OCI-LY7 (cell line): ENCODE measurements at regions of chr2 and their contacts with region 1.

Region 1: DNA sequence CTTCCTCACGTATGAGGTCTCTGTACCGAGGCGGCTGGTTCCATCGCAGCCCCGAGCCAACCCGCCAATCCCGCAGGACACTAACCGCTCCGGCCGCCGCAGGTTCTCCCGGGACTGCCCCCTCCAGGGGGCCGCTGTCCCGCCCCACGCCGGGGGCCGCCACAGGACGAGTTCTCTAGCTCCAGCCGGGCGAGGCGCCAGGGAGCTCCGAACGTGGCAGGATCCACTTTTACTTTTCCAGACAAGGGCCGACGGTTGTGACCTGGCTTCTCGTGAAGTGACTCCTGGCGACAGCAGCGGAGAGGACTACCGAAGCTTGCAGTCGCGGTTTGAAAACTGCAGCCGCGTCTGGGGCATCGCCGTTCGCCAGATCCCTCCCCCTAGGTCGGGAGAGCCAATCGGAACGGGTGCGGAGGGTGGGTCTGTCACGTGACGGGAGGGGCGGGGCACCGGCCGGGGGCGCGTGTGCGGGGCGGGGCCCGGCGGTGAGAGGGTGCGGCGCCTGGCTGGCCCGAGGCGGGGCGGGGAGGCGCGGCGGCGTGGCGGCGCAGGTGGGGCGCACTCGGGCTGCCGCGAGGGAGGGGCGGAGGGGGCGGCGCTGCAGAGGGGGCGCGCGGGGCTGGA is at the start of gene STK17B:
- DNase-seq: peak; percentile 97
- H3K4me3 ChIP-seq: peak within 1 kb of the TSS; percentile 98
- H3K27ac ChIP-seq: peak within 1 kb of the TSS; percentile 99
- H3K4me1 ChIP-seq: peaks cover 37% of the 10 kb centered on the region
- CTCF ChIP-seq: no peak
- total RNA-seq, gene STK17B: 87.4 and 95.0 TPM in 2 replicates

Region 2: GRCh38 chr2:195559431-195559914 is 611.9 kb before region 1 on chr2:
- CTCF ChIA-PET with region 1: no interaction called
- POLR2A ChIA-PET with region 1: interaction called, 4 read pairs
- intact Hi-C with region 1: loop called (anchors 5 kb)
- DNase-seq: peak; percentile 97
- H3K4me3 ChIP-seq: peak overlapping the region; percentile 38
- H3K27ac ChIP-seq: peak overlapping the region; percentile 95
- H3K4me1 ChIP-seq: peaks cover 68% of the 10 kb centered on the region
- CTCF ChIP-seq: no peak

Region 3: DNA sequence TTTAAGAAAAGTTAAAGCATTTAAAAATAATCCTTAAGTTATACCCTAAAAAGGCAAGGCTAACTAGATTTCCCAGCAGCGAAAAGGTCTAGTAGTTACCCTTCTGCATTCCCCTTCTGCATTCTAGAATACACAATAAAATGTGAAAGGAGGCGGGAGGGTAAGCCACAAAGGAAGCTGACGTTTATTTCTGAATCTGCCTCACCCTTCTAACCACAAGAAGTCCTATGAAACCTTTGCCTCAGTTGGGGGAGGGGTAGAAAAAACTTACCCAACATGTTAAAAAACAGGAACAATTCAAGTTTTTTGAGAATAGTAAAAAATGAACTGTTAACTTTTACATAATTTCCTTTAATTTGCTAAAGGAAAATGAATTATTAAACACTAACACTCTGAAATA is 11.3 kb before region 1 on chr2:
- CTCF ChIA-PET with region 1: interaction called, 3 read pairs
- POLR2A ChIA-PET with region 1: interaction called, 110 read pairs
- intact Hi-C with region 1: loop called (anchors 1 kb)
- DNase-seq: peak; percentile 91
- H3K4me3 ChIP-seq: peak overlapping the region; percentile 54
- H3K27ac ChIP-seq: peak overlapping the region; percentile 82
- H3K4me1 ChIP-seq: peaks cover 84% of the 10 kb centered on the region
- CTCF ChIP-seq: no peak

Region 4: GRCh38 chr2:196200557-196200956 is 29.2 kb after region 1 on chr2:
- CTCF ChIA-PET with region 1: interaction called, 3 read pairs
- POLR2A ChIA-PET with region 1: interaction called, 104 read pairs
- intact Hi-C with region 1: no loop called
- DNase-seq: peak; percentile 45
- H3K4me3 ChIP-seq: peak overlapping the region; percentile 42
- H3K27ac ChIP-seq: no peak overlapping the region
- H3K4me1 ChIP-seq: peaks cover 46% of the 10 kb centered on the region
- CTCF ChIP-seq: no peak

Region 5: DNA sequence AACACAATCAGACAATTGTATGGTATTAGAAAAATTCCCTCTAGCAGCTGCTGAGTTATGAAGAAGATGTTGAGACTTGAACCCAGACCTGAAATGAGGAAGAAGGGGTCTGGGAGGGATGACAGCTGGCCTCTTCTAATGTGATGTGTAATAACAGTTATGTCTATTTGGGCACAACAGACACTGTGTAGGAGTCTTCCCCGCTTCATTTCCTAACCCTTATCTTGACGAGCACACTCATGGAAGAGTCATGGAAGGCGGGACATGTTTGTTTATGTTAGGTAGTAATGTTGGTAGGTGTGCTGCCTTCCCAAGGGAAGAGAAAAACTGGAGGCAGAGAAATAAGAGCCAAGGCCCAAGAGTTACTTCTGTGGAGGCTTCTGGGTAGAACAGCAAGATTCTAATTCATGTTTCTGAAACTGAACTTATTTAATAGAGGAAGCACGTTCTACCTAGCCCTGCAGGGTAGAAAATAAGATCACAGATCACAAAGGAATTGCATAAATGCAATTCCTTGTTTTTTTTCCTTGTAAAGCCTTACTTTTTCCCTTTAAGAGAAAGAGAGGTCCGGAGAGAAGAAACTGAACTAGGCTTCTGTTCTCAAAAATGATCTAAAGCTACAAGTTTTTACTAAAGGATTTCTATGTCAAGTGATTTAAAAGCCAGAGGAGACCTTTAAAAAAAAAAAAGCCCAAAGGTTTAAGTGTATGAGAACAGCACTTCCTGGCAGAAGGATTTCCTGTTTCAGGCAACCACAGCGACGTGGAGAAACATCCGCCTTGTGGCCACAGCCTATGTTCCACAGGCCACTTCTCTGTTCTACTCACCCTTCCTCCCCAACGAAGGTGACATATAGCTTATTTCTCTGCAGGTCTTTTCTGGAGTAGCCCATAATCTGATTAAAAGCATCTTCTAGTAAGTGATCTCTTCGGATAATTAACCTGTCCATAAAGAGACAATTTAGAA is 68.5 kb after region 1 on chr2:
- CTCF ChIA-PET with region 1: interaction called, 4 read pairs
- POLR2A ChIA-PET with region 1: interaction called, 121 read pairs
- intact Hi-C with region 1: loop called (anchors 1 kb)
- DNase-seq: peak; percentile 96
- H3K4me3 ChIP-seq: peak overlapping the region; percentile 53
- H3K27ac ChIP-seq: peak overlapping the region; percentile 93
- H3K4me1 ChIP-seq: peaks cover 63% of the 10 kb centered on the region
- CTCF ChIP-seq: peak; percentile 37; the same call in 1 of the 2 replicates

Region 6: GRCh38 chr2:196263181-196263747 is 91.9 kb after region 1 on chr2:
- CTCF ChIA-PET with region 1: no interaction called
- POLR2A ChIA-PET with region 1: interaction called, 15 read pairs
- intact Hi-C with region 1: no loop called
- DNase-seq: peak; percentile 72
- H3K4me3 ChIP-seq: peak overlapping the region; percentile 39
- H3K27ac ChIP-seq: peak overlapping the region; percentile 65
- H3K4me1 ChIP-seq: peaks cover 70% of the 10 kb centered on the region
- CTCF ChIP-seq: no peak

Region 7: GRCh38 chr2:197152451-197153228 is 981.3 kb after region 1 on chr2:
- CTCF ChIA-PET with region 1: no interaction called
- POLR2A ChIA-PET with region 1: no interaction called
- intact Hi-C with region 1: loop called (anchors 5 kb)
- DNase-seq: peak; percentile 94
- H3K4me3 ChIP-seq: peak overlapping the region; percentile 56
- H3K27ac ChIP-seq: peak overlapping the region; percentile 99
- H3K4me1 ChIP-seq: peaks cover 81% of the 10 kb centered on the region
- CTCF ChIP-seq: peak; percentile 64